Dendritic cell treated with granulocyte-macrophage colony-stimulating factor and Interleukin-4, amounts not matched to agents 40 ng/mL and 50 ng/mL, for 4 days (primary cell): ENCODE measurements at regions of chr15 and their contacts with region 1.

Region 1: GRCh38 chr15:76931397-76932007 is at the start of gene RCN2:
- H3K4me3 Mint-ChIP-seq: peak within 1 kb of the TSS; percentile 80
- H3K27ac Mint-ChIP-seq: peak within 1 kb of the TSS; percentile 75
- H3K4me1 Mint-ChIP-seq: peaks cover 10% of the 10 kb centered on the region
- H3K27me3 Mint-ChIP-seq: no peaks in the 10 kb centered on the region

Region 2: GRCh38 chr15:76905013-76905839 is 26.3 kb before region 1 on chr15 and contains the start of gene SCAPER:
- intact Hi-C with region 1: loop called (anchors 2 kb)
- H3K4me3 Mint-ChIP-seq: peak within 1 kb of the TSS; percentile 90
- H3K27ac Mint-ChIP-seq: peak within 1 kb of the TSS; percentile 87
- H3K4me1 Mint-ChIP-seq: peaks cover 42% of the 10 kb centered on the region
- H3K27me3 Mint-ChIP-seq: peaks cover 5% of the 10 kb centered on the region

Region 3: GRCh38 chr15:76973362-76973743 is 41.9 kb after region 1 on chr15:
- intact Hi-C with region 1: no loop called
- H3K4me3 Mint-ChIP-seq: no peak overlapping the region
- H3K27ac Mint-ChIP-seq: peak overlapping the region; percentile 26
- H3K4me1 Mint-ChIP-seq: peaks cover 37% of the 10 kb centered on the region
- H3K27me3 Mint-ChIP-seq: no peaks in the 10 kb centered on the region